ENCODE measurements at regions of chr3 and their contacts with region 1.

Region 1: GRCh38 chr3:143084856-143085731 is 34.5 kb upstream of the CHST2 start:
- DNase-seq: peak; percentile 19
- ATAC-seq: peak; percentile 53
- H3K4me3 Mint-ChIP-seq: no peak overlapping the region
- H3K27ac Mint-ChIP-seq: peak overlapping the region; percentile 14
- H3K4me1 Mint-ChIP-seq: peaks cover 31% of the 10 kb centered on the region
- H3K27me3 Mint-ChIP-seq: no peaks in the 10 kb centered on the region
- CTCF ChIP-seq: no peak

Region 2: DNA sequence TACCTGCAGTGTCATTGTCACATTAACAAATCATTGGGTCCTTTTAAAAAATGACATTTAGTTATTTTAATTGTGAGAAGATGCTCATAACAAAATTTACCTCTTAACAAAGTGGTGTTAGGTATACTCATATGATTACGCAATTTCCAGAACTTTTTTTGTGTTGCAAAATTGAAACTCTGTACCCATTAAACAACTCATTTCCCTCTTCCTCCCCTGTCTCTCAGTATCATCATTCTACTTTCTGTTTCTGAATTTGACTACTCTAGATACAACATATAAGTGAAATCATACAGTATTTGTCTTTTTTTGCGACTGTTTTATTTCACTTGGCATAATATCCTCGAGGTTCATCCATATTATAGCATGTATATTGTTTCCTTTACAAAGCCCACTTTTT is 24.2 kb before region 1 on chr3:
- CTCF ChIA-PET with region 1: no interaction called
- POLR2A ChIA-PET with region 1: no interaction called
- intact Hi-C with region 1: loop called (anchors 1 kb)
- DNase-seq: no peak
- ATAC-seq: peak; percentile 57
- H3K4me3 Mint-ChIP-seq: no peak overlapping the region
- H3K27ac Mint-ChIP-seq: no peak overlapping the region
- H3K4me1 Mint-ChIP-seq: peaks cover 6% of the 10 kb centered on the region
- H3K27me3 Mint-ChIP-seq: no peaks in the 10 kb centered on the region
- CTCF ChIP-seq: no peak

Region 3: DNA sequence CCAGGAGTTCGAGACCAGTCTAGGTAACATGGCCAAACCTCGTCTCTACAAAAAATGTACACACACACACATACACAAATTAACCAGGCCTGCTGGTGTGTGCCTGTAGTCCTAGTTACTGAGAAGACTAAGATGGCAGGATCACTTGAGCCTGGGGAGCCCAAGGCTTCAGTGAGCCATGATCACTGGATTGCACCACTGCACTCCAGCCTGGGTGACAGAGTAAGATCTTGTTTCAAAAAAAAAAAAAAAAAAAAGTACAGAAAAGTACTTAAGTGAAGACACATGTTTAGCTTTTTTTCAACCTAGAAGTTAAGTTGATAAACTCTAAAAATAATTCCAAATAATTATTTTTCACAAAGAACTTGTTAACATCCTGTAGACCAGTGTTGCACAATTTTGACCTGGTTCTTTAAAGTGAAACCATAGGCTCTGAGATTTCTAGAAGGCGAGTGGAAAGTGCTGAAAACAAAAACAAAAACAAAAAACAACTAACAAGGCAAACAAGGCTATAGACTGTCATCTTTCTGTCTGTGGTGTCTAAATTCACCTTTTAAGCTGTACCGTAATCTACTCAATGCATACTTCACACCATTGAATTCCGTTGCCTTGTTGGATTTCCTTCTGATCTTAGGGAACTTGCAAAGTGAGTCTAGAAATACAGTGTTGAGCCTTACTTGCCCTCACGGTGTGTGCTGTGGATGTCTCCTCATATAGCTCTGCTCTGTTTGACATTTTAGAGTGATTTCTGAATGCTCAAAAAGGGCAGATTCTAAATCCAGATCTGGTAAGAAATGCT is 98.0 kb after region 1 on chr3:
- CTCF ChIA-PET with region 1: no interaction called
- POLR2A ChIA-PET with region 1: no interaction called
- intact Hi-C with region 1: loop called (anchors 5 kb)
- DNase-seq: no peak
- ATAC-seq: no peak
- H3K4me3 Mint-ChIP-seq: no peak overlapping the region
- H3K27ac Mint-ChIP-seq: no peak overlapping the region
- H3K4me1 Mint-ChIP-seq: peaks cover 49% of the 10 kb centered on the region
- H3K27me3 Mint-ChIP-seq: no peaks in the 10 kb centered on the region
- CTCF ChIP-seq: no peak